ENCODE measurements at regions of chr6 and their contacts with region 1.

Region 1: DNA sequence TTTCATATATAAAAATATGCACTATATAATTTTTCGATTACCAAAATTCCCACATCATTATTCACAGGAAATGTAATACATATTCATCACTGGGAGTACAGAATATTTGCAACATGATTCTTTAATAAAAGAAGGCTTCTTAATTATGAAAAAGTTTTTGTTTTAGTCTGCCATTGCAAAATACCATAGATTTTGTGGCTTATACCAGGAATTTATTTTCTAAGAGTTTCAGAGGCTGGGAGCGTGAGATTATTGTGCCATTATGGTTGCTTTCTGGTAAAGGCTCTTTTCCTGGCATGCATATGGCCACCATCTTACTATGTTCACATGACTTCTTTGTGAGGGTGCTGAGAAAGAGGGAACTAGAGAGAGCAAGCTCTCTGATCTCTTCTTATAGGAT is 306.9 kb upstream of the ADGRB3 start:
- DNase-seq: no peak
- H3K4me3 ChIP-seq: no peak overlapping the region
- H3K27ac ChIP-seq: no peak overlapping the region
- H3K4me1 ChIP-seq: no peaks in the 10 kb centered on the region
- H3K27me3 ChIP-seq: no peaks in the 10 kb centered on the region
- CTCF ChIP-seq: no peak
- POLR2A ChIP-seq: no peak

Region 2: GRCh38 chr6:68307301-68307700 is 20.9 kb before region 1 on chr6:
- intact Hi-C with region 1: loop called (anchors 2 kb)
- DNase-seq: no peak
- H3K4me3 ChIP-seq: no peak overlapping the region
- H3K27ac ChIP-seq: no peak overlapping the region
- H3K4me1 ChIP-seq: no peaks in the 10 kb centered on the region
- H3K27me3 ChIP-seq: no peaks in the 10 kb centered on the region
- CTCF ChIP-seq: no peak
- POLR2A ChIP-seq: no peak

Measured in vagina (tissue), 2 donors.